Esophagus squamous epithelium (tissue), 5 donors: ENCODE measurements at regions of chr17 and their contacts with region 1.

Region 1: DNA sequence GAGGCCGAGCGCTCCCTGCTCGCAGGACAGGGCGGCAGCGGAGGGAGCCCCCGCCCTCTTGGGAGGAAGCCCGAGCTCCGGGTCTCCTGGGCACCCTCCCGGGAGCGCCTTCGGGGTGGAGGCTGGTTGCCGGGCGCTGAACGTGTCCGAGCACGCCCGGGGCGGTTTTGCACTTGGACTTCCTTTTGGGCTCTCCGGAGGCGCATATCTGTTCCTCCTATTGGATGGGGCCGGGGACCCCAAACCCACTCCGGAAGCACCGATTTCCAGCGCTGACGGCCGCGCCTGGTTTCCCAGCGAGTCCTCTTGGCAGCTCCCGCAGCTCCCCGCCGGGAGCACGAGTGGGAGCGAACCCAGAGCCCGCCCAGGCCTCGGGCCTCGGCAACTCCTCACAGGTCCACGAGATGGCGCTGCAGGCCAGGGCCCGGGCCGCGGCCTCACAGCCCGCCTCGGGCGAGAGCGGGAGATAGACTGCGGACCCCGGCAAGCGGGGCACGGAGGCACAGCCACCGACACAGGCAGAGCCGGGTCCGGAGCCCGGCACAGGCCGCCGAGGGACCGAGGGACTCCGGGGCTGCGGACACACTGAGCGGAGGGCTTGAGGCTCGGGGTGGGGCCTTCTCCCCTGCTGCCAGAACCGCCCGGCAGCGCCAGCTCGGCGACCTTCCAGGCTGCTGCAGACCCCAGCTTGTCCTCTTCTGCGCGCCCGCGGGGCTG is 12.7 kb downstream of the TBX2 start:
- DNase-seq: no peak
- H3K4me3 ChIP-seq: peak overlapping the region; percentile 63 to 75 (median 70)
- H3K27ac ChIP-seq: peak overlapping the region; percentile 82 to 92 (median 90)
- H3K4me1 ChIP-seq: peaks cover 35 to 93% (median 40%) of the 10 kb centered on the region in 3 donors
- H3K27me3 ChIP-seq: peaks cover 0 to 98% (median 5%) of the 10 kb centered on the region in 4 donors
- CTCF ChIP-seq: peak; percentile 91 to 99 (median 98)
- POLR2A ChIP-seq: no peak

Region 2: DNA sequence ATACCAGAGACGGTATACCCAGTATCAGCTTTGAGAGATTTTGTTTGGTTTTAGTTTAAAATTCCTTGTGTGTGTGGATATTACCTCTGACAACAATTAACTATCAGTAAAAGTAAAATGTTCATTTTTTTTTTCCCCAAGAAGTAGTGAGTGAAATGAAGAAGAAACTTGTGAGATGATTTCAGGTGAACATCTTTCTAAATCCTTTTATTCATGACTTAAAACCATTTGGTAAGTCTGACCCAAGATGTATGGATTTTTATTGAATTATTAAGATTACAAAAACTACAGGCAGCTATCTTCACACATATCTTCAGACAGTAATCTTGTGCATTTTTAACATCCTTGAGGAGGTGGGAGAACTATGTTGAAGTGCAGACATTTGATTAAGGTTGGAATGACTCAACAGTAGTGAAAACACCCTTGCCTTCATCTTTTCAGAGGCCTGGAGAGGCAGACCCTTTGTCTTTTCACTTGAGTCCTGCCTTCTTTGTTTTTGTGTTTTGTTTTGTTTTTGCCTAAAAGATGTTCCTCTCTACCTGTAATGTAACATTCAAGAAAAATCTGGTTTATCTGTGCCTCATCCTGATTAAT is 253.0 kb before region 1 on chr17:
- intact Hi-C with region 1: no loop called
- DNase-seq: no peak
- H3K4me3 ChIP-seq: no peak overlapping the region
- H3K27ac ChIP-seq: no peak overlapping the region
- H3K4me1 ChIP-seq: peaks cover 0 to 8% (median 0%) of the 10 kb centered on the region in 3 donors
- H3K27me3 ChIP-seq: no peaks in the 10 kb centered on the region
- CTCF ChIP-seq: no peak
- POLR2A ChIP-seq: no peak

Region 3: DNA sequence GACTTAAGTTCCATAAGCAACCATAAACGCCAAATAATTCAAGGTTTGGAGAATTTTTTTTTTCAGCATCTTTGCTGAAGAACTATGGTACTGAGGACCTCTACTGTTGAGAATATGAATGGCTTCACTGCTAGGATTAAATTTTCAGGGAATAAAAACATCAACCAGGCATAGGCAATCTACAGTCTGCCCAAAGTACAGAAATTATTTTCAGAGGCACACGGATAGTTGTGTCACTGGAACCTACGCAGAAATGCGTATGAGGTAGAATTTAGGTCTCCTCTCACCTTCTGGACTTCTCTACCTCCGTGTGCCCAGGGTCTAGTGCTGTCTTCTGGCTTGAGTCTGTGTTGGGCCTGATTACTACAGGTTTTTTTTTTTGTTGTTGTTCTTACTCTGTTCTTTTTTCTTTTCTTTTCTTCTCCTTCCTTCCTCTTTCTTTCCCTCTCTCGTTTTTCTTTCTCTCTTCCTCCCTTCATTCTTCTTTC is 139.0 kb after region 1 on chr17:
- intact Hi-C with region 1: loop called (anchors 2 kb)
- DNase-seq: no peak
- H3K4me3 ChIP-seq: no peak overlapping the region
- H3K27ac ChIP-seq: no peak overlapping the region
- H3K4me1 ChIP-seq: no peaks in the 10 kb centered on the region
- H3K27me3 ChIP-seq: peaks cover 0 to 51% (median 0%) of the 10 kb centered on the region in 4 donors
- CTCF ChIP-seq: peak in 5 of 6 experiments; percentile 53 to 75 (median 57)
- POLR2A ChIP-seq: no peak

Region 4: DNA sequence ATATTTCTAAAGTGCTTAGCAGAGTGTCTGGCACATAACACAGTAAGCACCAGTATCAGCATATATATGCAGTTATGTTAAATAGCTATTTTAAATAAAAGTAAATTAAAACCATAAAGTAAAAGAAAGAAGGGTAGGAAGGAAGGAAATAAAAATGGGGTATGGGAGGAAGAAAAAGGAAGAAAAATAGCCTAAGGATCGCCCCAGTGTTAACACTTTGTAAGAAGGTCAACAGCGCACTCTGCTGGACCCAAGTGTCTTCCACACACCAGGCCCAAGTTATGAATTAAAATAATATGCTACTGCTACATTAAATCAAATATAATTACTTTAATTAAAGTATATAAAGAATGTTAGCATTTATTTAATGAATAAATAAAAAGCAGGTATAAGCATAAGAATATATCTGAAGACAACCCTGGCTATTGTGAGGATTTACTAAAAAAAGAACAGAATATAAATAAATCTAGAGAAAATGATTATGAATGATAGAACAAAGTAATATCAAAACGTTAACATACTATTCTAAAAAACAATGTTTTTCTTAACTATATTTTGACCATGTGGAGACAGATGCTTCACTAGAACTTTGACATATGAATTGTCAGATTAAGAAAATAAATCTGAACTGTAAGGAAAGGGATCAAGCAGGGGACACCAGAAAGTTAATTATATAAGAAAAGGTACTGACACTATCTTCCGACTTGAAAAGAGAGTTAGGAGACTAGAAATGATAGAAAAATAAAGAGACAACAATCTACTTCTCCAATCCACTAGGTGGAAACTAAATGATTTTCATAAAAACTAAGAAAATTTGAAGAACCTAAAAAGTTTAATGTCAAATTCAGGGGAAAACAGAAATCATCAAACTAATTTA is 425.1 kb after region 1 on chr17:
- intact Hi-C with region 1: loop called (anchors 5 kb)
- DNase-seq: no peak
- H3K4me3 ChIP-seq: no peak overlapping the region
- H3K27ac ChIP-seq: no peak overlapping the region
- H3K4me1 ChIP-seq: peaks cover 0 to 8% (median 0%) of the 10 kb centered on the region in 3 donors
- H3K27me3 ChIP-seq: no peaks in the 10 kb centered on the region
- CTCF ChIP-seq: peak; percentile 26 to 81 (median 73)
- POLR2A ChIP-seq: no peak